GM12878 (cell line): ENCODE measurements at regions of chr2 and their contacts with region 1.

Region 1: DNA sequence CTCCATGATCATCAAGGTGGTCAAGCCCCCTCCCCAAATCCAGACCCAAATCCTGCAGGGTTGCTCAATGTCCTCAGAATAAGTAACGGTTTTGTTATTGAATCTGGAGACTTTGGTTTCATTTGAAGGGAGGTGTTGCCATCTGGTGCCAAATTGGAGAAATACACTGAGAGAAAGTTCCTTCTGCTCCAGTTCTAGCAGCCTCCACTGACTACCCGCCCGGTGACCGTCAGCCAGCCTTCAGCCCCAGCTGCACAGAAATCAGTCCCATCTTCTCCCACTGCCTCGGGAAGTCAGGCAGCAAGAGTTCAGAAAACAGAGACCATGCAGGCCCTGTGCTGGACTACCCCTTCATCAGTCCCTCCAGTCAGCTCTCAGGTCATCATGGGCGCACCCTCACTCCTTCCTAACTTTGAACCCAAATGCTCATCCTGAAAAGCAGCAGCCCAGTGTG is 38.7 kb downstream of the PKDCC start:
- DNase-seq: no peak
- ATAC-seq: peak; percentile 73
- H3K4me3 ChIP-seq: no peak overlapping the region
- H3K27ac ChIP-seq: no peak overlapping the region
- H3K4me1 ChIP-seq: no peaks in the 10 kb centered on the region
- H3K27me3 ChIP-seq: 0 out of 4 replicates have a peak, but pooled peaks cover 0 to 3% of the 10 kb centered on the region in 2 experiments
- CTCF ChIP-seq: peak; percentile 61 to 83 (median 73); a peak in 4 of 6 replicates
- EP300 ChIP-seq: no peak
- POLR2A ChIP-seq: no peak
- RAD21 ChIP-seq: peak; percentile 96

Region 2: DNA sequence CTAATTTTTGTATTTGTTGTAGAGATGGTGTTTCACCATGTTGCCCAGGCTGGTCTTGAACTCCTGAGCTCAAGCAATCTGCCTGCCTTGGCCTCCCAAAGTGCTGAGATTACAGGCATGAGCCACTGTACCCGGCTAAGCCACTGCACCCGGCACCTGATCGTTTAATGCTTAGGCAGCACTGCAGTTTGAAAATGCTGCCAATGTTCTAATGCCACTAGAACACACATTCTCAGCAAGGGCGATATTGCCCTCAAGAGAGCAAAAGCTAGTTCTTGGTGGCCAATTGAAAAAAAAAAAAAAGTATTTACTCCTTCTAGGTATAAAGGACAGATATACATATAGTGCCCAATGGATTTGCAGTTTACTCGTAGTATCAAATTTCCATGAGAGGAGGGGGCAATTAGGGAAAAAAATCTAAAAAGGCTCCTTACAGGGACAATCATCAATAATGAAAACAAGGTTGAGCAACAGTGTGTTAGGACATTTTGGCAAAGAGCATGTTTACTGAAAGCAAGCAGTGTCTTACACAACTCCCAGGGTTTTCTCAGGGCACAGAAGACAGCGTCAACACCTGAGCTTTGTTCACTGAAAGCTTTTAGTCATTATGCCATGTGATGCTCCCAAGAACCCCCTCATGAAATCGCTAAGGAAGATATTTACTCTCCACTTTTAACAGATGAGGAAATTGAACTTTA is 238.6 kb before region 1 on chr2:
- CTCF ChIA-PET with region 1: interaction called, 110 read pairs
- POLR2A ChIA-PET with region 1: no interaction called
- RAD21 ChIA-PET with region 1: interaction called, 13 read pairs
- SMC1A ChIA-PET with region 1: interaction called, 19 read pairs
- in situ Hi-C with region 1: no loop called
- intact Hi-C with region 1: loop called (anchors 1 kb)
- DNase-seq: no peak
- ATAC-seq: no peak
- H3K4me3 ChIP-seq: no peak overlapping the region
- H3K27ac ChIP-seq: no peak overlapping the region
- H3K4me1 ChIP-seq: no peaks in the 10 kb centered on the region
- H3K27me3 ChIP-seq: peaks cover 1 to 3% of the 10 kb centered on the region in 2 experiments; a peak in 3 of 4 replicates
- CTCF ChIP-seq: no peak
- EP300 ChIP-seq: no peak
- POLR2A ChIP-seq: no peak
- RAD21 ChIP-seq: no peak

Region 3: GRCh38 chr2:41859615-41860520 is 226.7 kb before region 1 on chr2:
- CTCF ChIA-PET with region 1: interaction called, 110 read pairs
- POLR2A ChIA-PET with region 1: no interaction called
- RAD21 ChIA-PET with region 1: interaction called, 4 read pairs
- SMC1A ChIA-PET with region 1: interaction called, 18 read pairs
- in situ Hi-C with region 1: no loop called
- intact Hi-C with region 1: no loop called
- DNase-seq: no peak
- ATAC-seq: no peak
- H3K4me3 ChIP-seq: no peak overlapping the region
- H3K27ac ChIP-seq: no peak overlapping the region
- H3K4me1 ChIP-seq: no peaks in the 10 kb centered on the region
- H3K27me3 ChIP-seq: no peaks in the 10 kb centered on the region
- CTCF ChIP-seq: no peak
- EP300 ChIP-seq: no peak
- POLR2A ChIP-seq: no peak
- RAD21 ChIP-seq: no peak

Region 4: DNA sequence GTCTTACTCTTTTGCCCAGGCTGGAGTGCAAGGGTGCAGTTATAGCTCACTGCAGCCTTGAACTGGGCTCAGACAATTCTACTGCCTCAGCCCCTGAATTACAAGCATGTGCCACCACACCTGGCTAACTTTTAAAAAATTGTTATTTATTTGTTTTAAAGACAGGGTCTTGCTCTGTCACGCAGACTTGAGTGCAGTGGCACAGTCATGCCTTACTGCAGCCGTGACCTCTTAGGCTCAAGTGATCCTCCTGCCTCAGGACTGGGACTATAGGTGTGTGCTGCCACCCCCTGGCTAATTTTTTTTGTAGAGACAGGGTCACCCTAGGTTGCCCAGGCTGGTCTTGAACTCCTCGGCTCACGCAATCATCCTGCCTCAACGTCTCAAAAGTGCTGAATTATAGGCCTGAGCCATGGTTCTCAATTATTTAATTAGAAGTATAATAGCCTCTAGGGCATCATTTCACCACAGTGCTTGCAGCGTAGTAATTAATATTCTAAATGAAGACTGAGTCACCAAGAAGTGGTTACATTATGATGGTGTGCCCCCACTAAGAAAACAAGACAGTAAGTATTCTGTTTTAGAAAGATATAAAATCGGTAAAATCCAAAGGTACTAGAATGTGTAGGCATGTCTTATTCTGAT is 152.2 kb after region 1 on chr2:
- CTCF ChIA-PET with region 1: interaction called, 186 read pairs
- POLR2A ChIA-PET with region 1: no interaction called
- RAD21 ChIA-PET with region 1: interaction called, 5 read pairs
- SMC1A ChIA-PET with region 1: interaction called, 12 read pairs
- in situ Hi-C with region 1: loop called (anchors 10 kb)
- intact Hi-C with region 1: no loop called
- DNase-seq: no peak
- ATAC-seq: peak; percentile 94
- H3K4me3 ChIP-seq: no peak overlapping the region
- H3K27ac ChIP-seq: no peak overlapping the region
- H3K4me1 ChIP-seq: no peaks in the 10 kb centered on the region
- H3K27me3 ChIP-seq: no peaks in the 10 kb centered on the region
- CTCF ChIP-seq: peak; percentile 22 to 55 (median 29); a peak in 4 of 6 replicates
- EP300 ChIP-seq: no peak
- POLR2A ChIP-seq: no peak
- RAD21 ChIP-seq: peak; percentile 84

Region 5: DNA sequence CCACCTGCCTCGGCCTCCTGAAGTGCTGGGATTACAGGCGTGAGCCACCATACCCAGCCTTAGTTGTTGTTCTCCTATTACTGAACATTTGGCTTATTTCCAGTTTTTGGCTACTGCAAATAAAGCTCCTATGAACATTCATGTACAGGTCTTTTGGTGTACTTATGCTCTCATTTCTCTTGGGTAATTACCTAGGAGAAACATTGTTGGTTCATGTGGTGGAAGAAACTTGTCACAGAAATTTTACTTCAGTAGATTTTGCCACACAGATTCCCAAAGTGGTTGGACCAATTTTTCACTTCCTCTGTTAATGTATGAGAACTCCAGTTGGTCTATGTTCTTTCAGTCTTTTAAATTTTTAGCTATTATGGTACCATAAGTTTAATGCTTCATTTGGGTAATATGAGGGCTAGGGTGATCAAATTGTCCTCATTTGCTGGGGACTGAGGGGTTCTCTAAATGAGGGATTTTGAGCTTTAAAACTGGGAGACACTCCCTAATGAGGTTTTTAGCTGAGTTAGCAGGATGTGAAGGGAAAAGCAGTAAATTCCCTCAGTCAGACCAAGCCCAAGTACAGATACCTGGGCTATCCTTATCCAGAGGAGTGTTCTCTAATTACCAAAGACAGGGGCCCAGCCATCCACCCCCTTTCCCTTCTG is 515.8 kb after region 1 on chr2:
- CTCF ChIA-PET with region 1: no interaction called
- POLR2A ChIA-PET with region 1: no interaction called
- RAD21 ChIA-PET with region 1: no interaction called
- SMC1A ChIA-PET with region 1: no interaction called
- in situ Hi-C with region 1: no loop called
- intact Hi-C with region 1: no loop called
- DNase-seq: peak; percentile 51
- ATAC-seq: peak; percentile 50
- H3K4me3 ChIP-seq: no peak overlapping the region
- H3K27ac ChIP-seq: peak overlapping the region; percentile 48
- H3K4me1 ChIP-seq: peaks cover 33% of the 10 kb centered on the region
- H3K27me3 ChIP-seq: no peaks in the 10 kb centered on the region
- CTCF ChIP-seq: no peak
- EP300 ChIP-seq: peak in 1 of 2 experiments; percentile 45; a peak in 1 of 4 replicates
- POLR2A ChIP-seq: no peak
- RAD21 ChIP-seq: no peak

Region 6: GRCh38 chr2:42895134-42895790 is 808.7 kb after region 1 on chr2:
- CTCF ChIA-PET with region 1: no interaction called
- POLR2A ChIA-PET with region 1: no interaction called
- RAD21 ChIA-PET with region 1: no interaction called
- SMC1A ChIA-PET with region 1: no interaction called
- in situ Hi-C with region 1: no loop called
- intact Hi-C with region 1: no loop called
- DNase-seq: no peak
- ATAC-seq: no peak
- H3K4me3 ChIP-seq: no peak overlapping the region
- H3K27ac ChIP-seq: no peak overlapping the region
- H3K4me1 ChIP-seq: no peaks in the 10 kb centered on the region
- H3K27me3 ChIP-seq: no peaks in the 10 kb centered on the region; a peak in 1 of 4 replicates
- CTCF ChIP-seq: no peak
- EP300 ChIP-seq: no peak
- POLR2A ChIP-seq: no peak
- RAD21 ChIP-seq: no peak